Posterior vena cava (tissue), 2 donors: ENCODE measurements at regions of chr18 and their contacts with region 1.

Region 1: DNA sequence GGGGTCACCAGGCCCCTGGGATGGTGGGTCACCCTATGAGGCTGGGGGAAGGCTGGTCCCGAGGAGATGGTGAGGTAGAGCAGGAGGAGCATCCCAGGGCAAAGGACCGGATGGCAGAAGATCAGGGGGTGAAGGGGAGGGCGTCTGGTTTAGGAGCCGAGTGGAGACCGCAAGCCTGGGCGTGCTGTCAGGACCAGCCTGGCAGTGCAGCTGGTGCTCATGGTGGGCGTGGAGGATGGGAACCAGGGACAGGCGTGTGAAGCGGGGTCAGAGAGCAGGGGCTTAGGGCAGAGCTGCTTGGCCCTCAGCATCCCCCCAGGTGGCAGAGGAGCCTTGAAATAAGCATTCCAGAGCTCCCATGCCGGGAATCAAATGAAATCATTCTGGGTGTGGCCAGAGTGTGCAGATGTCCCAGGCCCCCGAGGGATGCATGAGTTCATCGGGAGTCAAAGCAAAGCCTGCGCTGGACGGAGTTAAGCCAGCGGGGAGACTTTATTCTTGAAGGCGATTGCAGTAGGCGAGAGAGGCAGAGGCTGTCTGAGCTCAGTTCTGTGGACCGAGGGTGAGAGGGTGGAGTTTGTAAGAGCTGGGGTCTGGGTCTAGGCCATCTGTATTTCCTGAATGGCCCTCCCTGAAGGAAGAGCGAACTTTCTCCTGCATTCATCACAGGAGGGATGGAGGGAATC is 33.1 kb upstream of the MBP start:
- DNase-seq: peak; percentile 88

Region 2: GRCh38 chr18:77144451-77145118 is 21.1 kb before region 1 on chr18:
- intact Hi-C with region 1: loop called in 1 of 2 experiments (anchors 1 kb)
- DNase-seq: no peak